CD4-positive, alpha-beta memory T cell (primary cell): ENCODE measurements at regions of chr7 and their contacts with region 1.

Region 1: DNA sequence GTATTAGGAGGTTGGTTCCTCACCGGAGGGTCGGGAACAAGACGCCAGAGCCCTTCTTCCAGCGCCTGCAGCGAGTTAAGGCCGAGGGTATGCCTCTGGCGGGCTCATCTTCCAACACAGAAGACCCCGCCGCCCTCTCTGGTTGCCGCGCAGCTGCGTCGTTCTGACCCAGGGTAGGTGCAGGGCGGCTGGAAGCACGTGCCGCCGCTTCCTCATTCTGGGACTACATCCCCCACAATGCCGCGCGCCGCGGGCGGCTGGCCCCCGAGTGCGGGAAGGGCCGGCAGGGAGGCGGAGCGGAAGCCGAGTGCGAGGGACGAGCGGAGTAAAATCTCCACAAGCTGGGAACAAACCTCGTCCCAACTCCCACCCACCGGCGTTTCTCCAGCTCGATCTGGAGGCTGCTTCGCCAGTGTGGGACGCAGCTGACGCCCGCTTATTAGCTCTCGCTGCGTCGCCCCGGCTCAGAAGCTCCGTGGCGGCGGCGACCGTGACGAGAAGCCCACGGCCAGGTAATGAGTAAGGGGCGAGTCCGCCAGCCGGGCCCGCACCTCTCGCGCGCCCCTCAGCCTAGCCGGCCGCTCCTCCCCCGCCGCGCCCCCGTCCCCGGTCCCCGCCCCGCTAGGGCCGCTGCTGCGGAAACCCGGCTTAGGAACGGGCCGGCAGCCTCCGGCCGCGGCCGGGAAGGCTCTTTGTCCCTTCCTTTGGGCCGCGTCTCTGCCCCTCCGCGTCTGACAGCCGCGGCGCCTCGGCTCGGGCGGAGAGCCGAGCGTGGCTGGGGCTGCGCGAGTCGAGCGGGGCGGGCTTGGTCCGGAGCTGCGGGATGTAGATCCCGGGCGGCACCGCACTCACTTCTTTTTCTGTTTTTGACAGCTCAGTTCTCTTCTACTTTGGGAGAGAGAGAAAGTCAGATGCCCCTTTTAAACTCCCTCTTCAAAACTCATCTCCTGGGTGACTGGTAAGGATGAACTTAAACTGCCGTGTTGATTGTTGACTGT is at the start of gene CCDC126:
- DNase-seq: peak; percentile 73 to 80 (median 74)
- H3K4me3 ChIP-seq: peak within 1 kb of the TSS; percentile 61 to 67
- H3K4me3 Mint-ChIP-seq: peak within 1 kb of the TSS; percentile 86 to 96 (median 92)
- H3K27ac ChIP-seq: peak within 1 kb of the TSS; percentile 79
- H3K27ac Mint-ChIP-seq: peak within 1 kb of the TSS; percentile 47 to 91 (median 88)
- H3K4me1 ChIP-seq: peaks cover 19% of the 10 kb centered on the region
- H3K4me1 Mint-ChIP-seq: peaks cover 21 to 40% (median 35%) of the 10 kb centered on the region in 4 donors
- H3K27me3 ChIP-seq: no peaks in the 10 kb centered on the region
- H3K27me3 Mint-ChIP-seq: no peaks in the 10 kb centered on the region
- total RNA-seq, gene CCDC126: 15.5 to 17.7 TPM

Region 2: GRCh38 chr7:23539494-23539907 is 57.9 kb before region 1 on chr7:
- CTCF ChIA-PET with region 1: interaction called, 3 read pairs
- POLR2A ChIA-PET with region 1: interaction called, 11 read pairs
- intact Hi-C with region 1: no loop called
- DNase-seq: peak in 3 of 5 donors; percentile 40 to 42 (median 41)
- H3K4me3 ChIP-seq: peak overlapping the region in 1 of 2 donors; percentile 18
- H3K4me3 Mint-ChIP-seq: peak overlapping the region; percentile 51 to 85 (median 76)
- H3K27ac ChIP-seq: peak overlapping the region; percentile 36
- H3K27ac Mint-ChIP-seq: peak overlapping the region; percentile 65 to 90 (median 84)
- H3K4me1 ChIP-seq: peaks cover 22% of the 10 kb centered on the region
- H3K4me1 Mint-ChIP-seq: peaks cover 12 to 16% (median 14%) of the 10 kb centered on the region in 4 donors
- H3K27me3 ChIP-seq: no peaks in the 10 kb centered on the region
- H3K27me3 Mint-ChIP-seq: no peaks in the 10 kb centered on the region

Region 3: DNA sequence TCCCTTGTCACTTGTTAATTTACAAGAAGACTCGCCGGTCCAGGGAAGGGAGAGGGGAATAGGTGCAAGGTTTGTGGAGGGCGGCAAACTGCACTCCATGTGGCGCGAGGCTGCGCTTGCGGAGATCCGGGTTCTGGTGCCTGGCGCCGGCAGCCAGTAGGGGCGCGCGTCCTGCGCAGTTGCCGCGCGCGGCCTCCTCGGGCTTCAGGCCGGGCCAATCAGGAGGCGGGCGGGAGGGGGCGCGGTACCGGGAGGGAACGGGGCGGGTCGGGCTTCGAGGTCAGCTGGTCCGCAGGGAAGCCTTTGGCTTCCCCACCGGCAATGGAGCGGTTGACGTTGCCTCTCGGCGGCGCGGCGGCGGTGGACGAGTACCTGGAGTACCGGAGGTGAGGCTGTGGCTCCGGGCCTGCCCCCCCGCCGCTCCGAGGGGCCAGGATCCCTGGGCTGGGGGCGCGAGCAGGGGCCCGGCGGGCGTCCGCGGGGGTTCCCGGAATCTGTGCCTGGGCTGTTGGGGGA is 82.6 kb after region 1 on chr7 and contains the start of gene FAM221A:
- CTCF ChIA-PET with region 1: interaction called, 9 read pairs
- POLR2A ChIA-PET with region 1: interaction called, 17 read pairs
- intact Hi-C with region 1: loop called (anchors 1 kb)
- DNase-seq: peak; percentile 71 to 86 (median 77)
- H3K4me3 ChIP-seq: peak within 1 kb of the TSS; percentile 79 to 83
- H3K4me3 Mint-ChIP-seq: peak within 1 kb of the TSS; percentile 93 to 97 (median 96)
- H3K27ac ChIP-seq: peak within 1 kb of the TSS; percentile 68
- H3K27ac Mint-ChIP-seq: peak within 1 kb of the TSS; percentile 78 to 93 (median 87)
- H3K4me1 ChIP-seq: peaks cover 4% of the 10 kb centered on the region
- H3K4me1 Mint-ChIP-seq: peaks cover 7 to 30% (median 16%) of the 10 kb centered on the region in 4 donors
- H3K27me3 ChIP-seq: no peaks in the 10 kb centered on the region
- H3K27me3 Mint-ChIP-seq: peaks cover 0 to 4% of the 10 kb centered on the region in 2 donors
- total RNA-seq, gene FAM221A: 6.8 to 7.3 TPM